Heart right ventricle (tissue), 16 donors: ENCODE measurements at regions of chr11 and their contacts with region 1.

Region 1: DNA sequence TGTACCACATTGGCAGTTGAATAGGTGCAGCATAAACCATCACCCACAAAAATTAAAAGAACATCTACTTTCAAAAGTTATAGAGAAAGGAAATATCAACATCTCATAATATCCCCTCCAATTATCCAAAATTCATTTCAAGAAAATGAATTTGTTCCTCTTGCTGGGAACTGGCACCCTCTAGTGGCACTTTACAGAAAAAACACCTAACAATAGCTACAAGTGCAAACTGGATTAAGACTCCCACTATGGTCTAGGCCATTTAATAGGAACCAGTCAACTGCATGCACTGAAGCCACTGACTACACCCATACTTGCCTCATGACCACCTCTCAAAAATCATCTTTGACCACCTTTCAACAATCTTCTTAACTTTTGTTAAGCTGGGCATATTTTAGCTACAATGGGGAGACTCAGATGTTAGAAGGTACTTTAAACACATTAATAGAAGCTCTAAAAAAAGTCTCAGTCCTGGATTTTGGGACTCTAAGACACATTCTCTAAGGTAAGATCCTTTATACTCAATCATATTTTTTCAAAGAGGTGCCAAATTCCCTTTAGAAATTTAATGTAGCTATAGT is 17.3 kb downstream of the TRAF6 start:
- DNase-seq: peak in 1 of 2 donors; percentile 27
- ATAC-seq: peak in 2 of 8 donors; percentile 58 to 63
- H3K4me3 ChIP-seq: no peak overlapping the region
- H3K27ac ChIP-seq: no peak overlapping the region
- H3K4me1 ChIP-seq: peaks cover 0 to 29% (median 7%) of the 10 kb centered on the region in 9 donors
- H3K27me3 ChIP-seq: no peaks in the 10 kb centered on the region
- CTCF ChIP-seq: peak; percentile 62 to 91 (median 81)

Region 2: DNA sequence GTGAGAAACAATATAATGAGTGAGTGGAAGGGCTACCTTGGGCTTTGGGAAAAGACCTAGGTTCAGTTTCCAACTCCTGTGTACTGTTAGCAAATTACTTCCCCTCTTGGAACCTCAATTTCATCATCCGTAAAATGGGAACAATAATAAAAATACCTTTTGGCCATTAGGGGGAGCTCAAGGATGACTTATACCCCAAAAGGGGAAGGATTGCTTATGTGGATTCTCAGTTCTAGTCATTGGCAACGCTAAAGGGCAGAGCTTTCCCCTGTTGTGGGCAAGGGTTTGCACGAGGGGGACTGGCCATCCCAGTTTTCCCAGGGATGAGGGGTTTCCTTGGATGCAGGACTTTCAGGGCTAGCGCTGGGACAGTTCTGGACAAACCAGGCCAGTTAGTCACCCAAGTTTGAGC is 200.5 kb before region 1 on chr11:
- intact Hi-C with region 1: loop called in 3 of 10 experiments (anchors 5 kb)
- DNase-seq: no peak
- ATAC-seq: no peak
- H3K4me3 ChIP-seq: no peak overlapping the region
- H3K27ac ChIP-seq: no peak overlapping the region
- H3K4me1 ChIP-seq: peaks cover 0 to 20% (median 13%) of the 10 kb centered on the region in 9 donors
- H3K27me3 ChIP-seq: no peaks in the 10 kb centered on the region
- CTCF ChIP-seq: peak in 8 of 9 donors; percentile 15 to 63 (median 54)

Region 3: DNA sequence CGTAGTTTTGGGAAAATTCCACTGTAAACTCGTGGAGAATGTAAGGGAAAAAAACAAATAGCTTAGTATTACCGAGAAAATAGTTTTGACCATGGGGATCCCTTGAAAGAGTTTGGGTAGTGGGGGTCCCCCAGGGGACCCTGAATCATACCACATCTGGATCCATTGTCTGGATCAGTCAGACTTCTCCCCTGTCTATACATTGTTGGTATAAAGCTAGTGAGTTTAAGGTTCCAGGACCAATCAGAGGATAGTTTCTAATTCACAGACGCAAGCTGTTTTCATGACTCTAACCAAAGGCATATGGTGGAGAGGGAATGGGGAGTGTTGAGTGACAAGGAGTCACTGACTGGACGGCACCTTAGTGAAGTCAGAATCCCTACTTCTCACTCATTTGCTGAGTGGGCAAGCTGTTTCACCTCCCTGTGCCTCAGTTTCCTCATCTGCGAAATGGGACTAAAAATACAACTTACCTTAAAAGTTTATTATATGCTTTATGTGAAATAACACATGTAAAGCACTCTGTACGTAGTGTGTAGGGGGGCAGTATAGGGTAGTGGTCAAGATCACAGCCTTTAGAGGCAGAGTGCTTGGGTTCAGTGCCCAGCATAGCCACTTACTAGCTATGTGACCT is 72.9 kb before region 1 on chr11:
- intact Hi-C with region 1: loop called in 1 of 10 experiments (anchors 2 kb)
- DNase-seq: no peak
- ATAC-seq: no peak
- H3K4me3 ChIP-seq: no peak overlapping the region
- H3K27ac ChIP-seq: peak overlapping the region in 4 of 10 donors; percentile 5 to 69 (median 34)
- H3K4me1 ChIP-seq: peaks cover 0 to 53% (median 12%) of the 10 kb centered on the region in 9 donors
- H3K27me3 ChIP-seq: no peaks in the 10 kb centered on the region
- CTCF ChIP-seq: no peak

Region 4: GRCh38 chr11:36441610-36442208 is 51.1 kb before region 1 on chr11:
- intact Hi-C with region 1: no loop called
- DNase-seq: no peak
- ATAC-seq: peak in 6 of 8 donors; percentile 26 to 89 (median 60)
- H3K4me3 ChIP-seq: no peak overlapping the region
- H3K27ac ChIP-seq: peak overlapping the region in 5 of 10 donors; percentile 5 to 69 (median 43)
- H3K4me1 ChIP-seq: peaks cover 0 to 17% (median 0%) of the 10 kb centered on the region in 9 donors
- H3K27me3 ChIP-seq: no peaks in the 10 kb centered on the region
- CTCF ChIP-seq: no peak